PC-3 (cell line): ENCODE measurements at regions of chr18 and their contacts with region 1.

Region 1: GRCh38 chr18:45621061-45621511 is 5.8 kb downstream of the SLC14A2 start:
- DNase-seq: peak; percentile 51
- ATAC-seq: no peak
- H3K4me3 ChIP-seq: no peak overlapping the region
- H3K27ac ChIP-seq: no peak overlapping the region
- H3K4me1 ChIP-seq: peaks cover 18% of the 10 kb centered on the region
- H3K27me3 ChIP-seq: no peaks in the 10 kb centered on the region
- CTCF ChIP-seq: peak; percentile 72

Region 2: GRCh38 chr18:45657357-45658335 is 36.6 kb after region 1 on chr18:
- CTCF ChIA-PET with region 1: no interaction called
- POLR2A ChIA-PET with region 1: no interaction called
- intact Hi-C with region 1: loop called (anchors 5 kb)
- DNase-seq: peak; percentile 53
- ATAC-seq: peak; percentile 72
- H3K4me3 ChIP-seq: no peak overlapping the region
- H3K27ac ChIP-seq: peak overlapping the region; percentile 52
- H3K4me1 ChIP-seq: peaks cover 24% of the 10 kb centered on the region
- H3K27me3 ChIP-seq: no peaks in the 10 kb centered on the region
- CTCF ChIP-seq: no peak

Region 3: GRCh38 chr18:45686891-45687611 is 66.0 kb after region 1 on chr18:
- CTCF ChIA-PET with region 1: no interaction called
- POLR2A ChIA-PET with region 1: no interaction called
- intact Hi-C with region 1: no loop called
- DNase-seq: no peak
- ATAC-seq: no peak
- H3K4me3 ChIP-seq: no peak overlapping the region
- H3K27ac ChIP-seq: no peak overlapping the region
- H3K4me1 ChIP-seq: peaks cover 5% of the 10 kb centered on the region; the same call in 1 of the 2 replicates
- H3K27me3 ChIP-seq: no peaks in the 10 kb centered on the region
- CTCF ChIP-seq: no peak